Activated T-helper 1 cell treated with anti-CD3 and anti-CD28 coated beads, Interleukin-12 subunit alpha, Interleukin-12 subunit beta, Interleukin-2, Interleukin-4 antibody, amounts not matched to agents 30 ng/mL and 10 ng/mL and 1 ng/mL, durations not matched to agents 14 hours and 24 hours and 36 hours (primary cell): ENCODE measurements at regions of chr20 and their contacts with region 1.

Region 1: GRCh38 chr20:25696384-25697131 is at the start of gene ZNF337:
- DNase-seq: peak; percentile 93
- H3K4me3 Mint-ChIP-seq: peak within 1 kb of the TSS; percentile 91
- H3K27ac Mint-ChIP-seq: peak within 1 kb of the TSS; percentile 93
- H3K4me1 Mint-ChIP-seq: peaks cover 33% of the 10 kb centered on the region
- H3K27me3 Mint-ChIP-seq: peaks cover 2% of the 10 kb centered on the region
- total RNA-seq, gene ZNF337: 13.9 and 14.6 TPM in 2 replicates

Region 2: DNA sequence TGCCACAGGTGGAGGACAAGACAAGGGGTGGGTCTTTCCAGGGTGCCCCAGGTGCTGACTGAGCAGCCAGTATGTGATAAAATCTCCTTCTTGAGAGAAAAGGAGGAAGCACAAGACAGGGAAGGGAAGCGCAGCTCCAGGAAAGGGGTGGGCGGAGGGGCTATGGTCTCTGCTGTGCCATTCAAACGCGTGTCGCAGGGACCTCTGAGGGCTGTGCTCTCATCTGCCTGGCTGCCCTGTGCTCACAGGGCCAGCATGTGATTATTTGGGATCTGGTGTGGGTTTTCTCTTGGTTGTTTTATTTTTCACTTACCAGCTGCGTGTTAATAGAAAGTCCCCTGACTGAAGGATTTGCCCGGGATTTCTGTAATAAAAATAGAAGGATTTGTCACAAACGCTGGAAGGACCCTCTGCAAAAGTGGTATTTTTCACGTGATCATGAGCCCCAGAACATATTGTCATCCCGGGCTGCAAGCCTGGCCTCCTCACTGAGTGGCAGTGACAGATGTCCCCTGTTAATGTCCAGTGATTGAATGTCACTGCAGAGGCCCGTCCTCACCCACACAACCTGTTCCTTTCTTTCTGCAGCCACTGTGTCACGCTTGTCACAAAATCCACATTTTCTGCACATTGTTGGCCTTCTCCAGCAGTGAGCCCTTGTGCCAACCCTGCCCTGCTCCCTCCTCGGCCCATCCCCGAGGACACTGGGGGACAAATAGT is 579.7 kb before region 1 on chr20:
- intact Hi-C with region 1: no loop called
- DNase-seq: no peak
- H3K4me3 Mint-ChIP-seq: no peak overlapping the region
- H3K27ac Mint-ChIP-seq: no peak overlapping the region
- H3K4me1 Mint-ChIP-seq: no peaks in the 10 kb centered on the region
- H3K27me3 Mint-ChIP-seq: peaks cover 2% of the 10 kb centered on the region

Region 3: GRCh38 chr20:25195014-25195961 is 501.3 kb before region 1 on chr20 and contains the start of gene ENTPD6:
- intact Hi-C with region 1: loop called (anchors 5 kb)
- DNase-seq: peak; percentile 89
- H3K4me3 Mint-ChIP-seq: peak within 1 kb of the TSS; percentile 91
- H3K27ac Mint-ChIP-seq: peak within 1 kb of the TSS; percentile 81
- H3K4me1 Mint-ChIP-seq: peaks cover 20% of the 10 kb centered on the region
- H3K27me3 Mint-ChIP-seq: no peaks in the 10 kb centered on the region
- total RNA-seq, gene ENTPD6: 42.5 and 43.5 TPM in 2 replicates

Region 4: GRCh38 chr20:25390538-25391528 is 305.7 kb before region 1 on chr20 and contains the start of gene ABHD12:
- intact Hi-C with region 1: loop called (anchors 1 kb)
- DNase-seq: peak; percentile 93
- H3K4me3 Mint-ChIP-seq: peak within 1 kb of the TSS; percentile 90
- H3K27ac Mint-ChIP-seq: peak within 1 kb of the TSS; percentile 88
- H3K4me1 Mint-ChIP-seq: peaks cover 18% of the 10 kb centered on the region
- H3K27me3 Mint-ChIP-seq: peaks cover 6% of the 10 kb centered on the region
- total RNA-seq, gene ABHD12: 37.0 and 37.6 TPM in 2 replicates

Region 5: DNA sequence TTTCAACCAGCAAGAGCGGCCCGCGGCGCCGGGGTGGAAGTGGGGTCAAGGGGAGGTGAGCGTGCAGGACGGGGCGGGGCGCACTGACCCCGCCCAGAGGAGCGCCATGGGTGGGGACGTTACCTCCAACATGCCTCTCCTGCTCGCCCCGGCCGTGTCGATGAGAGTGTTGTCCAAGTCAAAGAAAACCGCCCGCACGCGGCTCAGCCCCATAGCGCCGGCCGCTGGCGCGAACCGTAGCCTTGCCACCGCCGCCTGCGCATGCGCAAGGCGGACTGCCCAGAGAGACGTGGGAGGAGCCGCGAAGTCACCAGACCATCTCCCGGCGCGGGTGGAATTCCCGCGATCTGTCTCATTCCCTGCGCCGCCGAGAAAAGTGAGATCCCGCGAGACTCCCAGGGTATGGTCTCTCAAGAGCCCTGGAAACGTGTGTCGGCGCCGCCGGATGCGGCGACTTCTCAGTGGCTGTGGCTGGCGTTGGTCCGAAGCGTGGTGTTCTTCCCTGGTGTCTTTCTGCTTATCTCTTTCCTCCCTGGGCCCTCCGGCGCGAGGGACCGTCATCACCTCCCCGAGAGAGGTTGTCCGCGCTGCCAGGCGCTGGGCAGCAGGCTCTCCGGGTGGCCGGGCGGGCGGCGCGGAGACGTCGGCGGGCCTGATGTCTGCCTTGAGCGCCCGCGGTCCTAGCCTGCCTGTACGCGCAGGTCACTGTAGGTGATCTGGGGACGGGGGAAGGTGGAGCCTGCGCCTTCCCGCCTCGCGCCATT is 72.6 kb before region 1 on chr20 and contains the start of gene NANP:
- intact Hi-C with region 1: loop called (anchors 1 kb)
- DNase-seq: peak; percentile 85
- H3K4me3 Mint-ChIP-seq: peak within 1 kb of the TSS; percentile 91
- H3K27ac Mint-ChIP-seq: peak within 1 kb of the TSS; percentile 98
- H3K4me1 Mint-ChIP-seq: peaks cover 39% of the 10 kb centered on the region
- H3K27me3 Mint-ChIP-seq: peaks cover 4% of the 10 kb centered on the region
- total RNA-seq, gene NANP: 9.1 and 9.8 TPM in 2 replicates

Region 6: GRCh38 chr20:25859649-25860530 is 163.3 kb after region 1 on chr20:
- intact Hi-C with region 1: loop called (anchors 2 kb)
- DNase-seq: peak; percentile 77
- H3K4me3 Mint-ChIP-seq: peak overlapping the region; percentile 82
- H3K27ac Mint-ChIP-seq: no peak overlapping the region
- H3K4me1 Mint-ChIP-seq: peaks cover 64% of the 10 kb centered on the region
- H3K27me3 Mint-ChIP-seq: peaks cover 59% of the 10 kb centered on the region